ENCODE measurements at regions of chr3 and their contacts with region 1.

Region 1: DNA sequence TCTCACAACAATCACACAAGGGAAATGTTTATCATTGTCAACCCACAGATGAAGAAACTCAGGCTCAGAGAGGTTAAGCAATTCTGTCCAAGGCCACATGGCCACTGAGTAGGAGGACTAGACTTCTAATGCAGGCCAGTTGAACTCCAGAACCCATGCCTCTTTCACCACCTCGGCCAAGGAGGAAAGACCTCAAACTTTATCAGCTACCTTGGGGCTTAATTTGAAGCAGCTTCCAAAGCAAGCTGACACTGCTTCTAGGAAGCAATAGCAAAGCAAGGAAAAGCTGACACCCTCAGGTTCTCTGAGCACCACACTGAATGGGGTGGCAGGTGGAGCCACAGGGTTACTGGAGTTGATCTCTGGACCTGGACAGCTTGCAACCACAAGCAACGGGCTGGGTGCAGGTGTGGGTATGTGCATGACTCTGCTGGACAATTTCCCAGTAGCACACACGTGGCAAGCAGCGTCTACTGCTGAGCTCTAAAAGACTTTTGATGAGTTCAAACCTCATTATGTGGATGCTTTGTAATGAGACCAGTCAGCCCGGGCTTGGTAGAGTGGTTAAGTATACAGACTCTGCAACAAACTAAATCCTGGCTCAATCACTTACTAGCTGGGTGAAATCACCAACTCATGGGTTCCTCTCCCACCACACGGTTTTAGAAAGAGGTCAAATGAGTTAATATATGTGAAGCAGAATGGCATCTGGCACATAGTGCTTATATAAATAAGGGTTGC is 23.1 kb downstream of the CCNL1 start:
- DNase-seq: no peak
- ATAC-seq: peak; percentile 16
- H3K4me3 ChIP-seq: no peak overlapping the region
- H3K4me3 Mint-ChIP-seq: no peak overlapping the region
- H3K27ac ChIP-seq: peak overlapping the region in 1 of 2 experiments; percentile 13
- H3K27ac Mint-ChIP-seq: peak overlapping the region; percentile 74
- H3K4me1 ChIP-seq: peaks cover 17% of the 10 kb centered on the region
- H3K4me1 Mint-ChIP-seq: peaks cover 37% of the 10 kb centered on the region
- H3K27me3 ChIP-seq: no peaks in the 10 kb centered on the region
- H3K27me3 Mint-ChIP-seq: no peaks in the 10 kb centered on the region
- CTCF ChIP-seq: no peak

Region 2: GRCh38 chr3:156040041-156040440 is 1096.8 kb before region 1 on chr3:
- CTCF ChIA-PET with region 1: no interaction called
- POLR2A ChIA-PET with region 1: no interaction called
- intact Hi-C with region 1: loop called (anchors 2 to 10 kb)
- DNase-seq: no peak
- ATAC-seq: no peak
- H3K4me3 ChIP-seq: no peak overlapping the region
- H3K4me3 Mint-ChIP-seq: no peak overlapping the region
- H3K27ac ChIP-seq: no peak overlapping the region
- H3K27ac Mint-ChIP-seq: no peak overlapping the region
- H3K4me1 ChIP-seq: no peaks in the 10 kb centered on the region
- H3K4me1 Mint-ChIP-seq: peaks cover 2% of the 10 kb centered on the region
- H3K27me3 ChIP-seq: no peaks in the 10 kb centered on the region
- H3K27me3 Mint-ChIP-seq: peaks cover 5% of the 10 kb centered on the region
- CTCF ChIP-seq: no peak

Region 3: DNA sequence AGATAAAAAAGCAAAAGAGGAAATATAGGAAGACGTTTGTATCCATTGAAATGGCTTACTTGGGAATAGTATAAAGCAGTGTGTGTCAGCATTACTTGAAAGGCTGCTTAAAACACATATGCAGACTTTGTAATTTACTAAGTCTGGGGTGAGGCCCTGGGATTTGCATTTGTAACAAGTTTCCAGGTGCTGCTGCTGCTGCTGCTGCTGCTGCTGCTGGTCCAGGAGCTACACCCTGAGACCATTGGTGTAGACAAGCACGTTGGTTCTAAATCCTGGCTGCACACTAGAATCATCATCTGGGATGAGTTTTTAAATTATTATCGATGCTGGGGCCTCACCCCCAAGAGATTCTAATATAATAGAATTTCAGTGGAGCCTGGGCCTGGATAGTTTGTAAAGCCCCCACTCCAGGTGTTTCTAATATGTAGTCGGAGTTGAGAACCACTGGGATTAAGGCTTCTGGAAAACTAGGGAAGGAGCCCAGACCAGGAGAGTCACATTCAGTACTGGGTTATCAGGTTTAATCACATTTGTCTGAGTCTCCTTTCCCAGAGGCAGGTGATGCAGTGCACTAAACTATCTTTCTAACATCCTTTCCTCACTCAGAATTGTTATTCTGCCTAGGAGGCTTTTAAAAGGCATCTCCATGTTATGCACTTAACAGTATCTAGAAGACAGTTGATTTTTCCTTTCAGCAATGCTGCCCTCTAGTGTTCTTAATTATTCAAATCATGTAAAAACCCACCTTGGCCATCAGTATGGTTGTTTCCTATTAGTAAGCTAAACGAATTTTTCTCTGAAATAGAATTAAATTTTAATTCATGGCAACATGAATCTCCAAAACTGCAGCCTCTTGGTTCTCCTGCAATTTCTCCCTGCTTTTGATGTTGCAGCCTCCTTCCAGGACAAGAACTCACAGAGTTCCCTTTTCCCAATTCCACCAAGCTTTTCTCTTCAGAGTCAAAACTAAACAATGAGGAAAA is 627.3 kb before region 1 on chr3:
- CTCF ChIA-PET with region 1: interaction called, 20 read pairs
- POLR2A ChIA-PET with region 1: no interaction called
- intact Hi-C with region 1: no loop called
- DNase-seq: peak in 2 of 9 experiments; percentile 61 to 72
- ATAC-seq: peak; percentile 86
- H3K4me3 ChIP-seq: no peak overlapping the region
- H3K4me3 Mint-ChIP-seq: no peak overlapping the region
- H3K27ac ChIP-seq: no peak overlapping the region
- H3K27ac Mint-ChIP-seq: no peak overlapping the region
- H3K4me1 ChIP-seq: no peaks in the 10 kb centered on the region
- H3K4me1 Mint-ChIP-seq: no peaks in the 10 kb centered on the region
- H3K27me3 ChIP-seq: no peaks in the 10 kb centered on the region
- H3K27me3 Mint-ChIP-seq: peaks cover 15% of the 10 kb centered on the region
- CTCF ChIP-seq: peak; percentile 69

Region 4: GRCh38 chr3:156554842-156555687 is 581.8 kb before region 1 on chr3 and contains the start of gene SSR3:
- CTCF ChIA-PET with region 1: interaction called, 16 read pairs
- POLR2A ChIA-PET with region 1: interaction called, 3 read pairs
- intact Hi-C with region 1: no loop called
- DNase-seq: peak; percentile 98 to 99 (median 98)
- ATAC-seq: peak; percentile 98
- H3K4me3 ChIP-seq: peak within 1 kb of the TSS; percentile 87 to 98
- H3K4me3 Mint-ChIP-seq: peak within 1 kb of the TSS; percentile 97
- H3K27ac ChIP-seq: peak within 1 kb of the TSS; percentile 76 to 89
- H3K27ac Mint-ChIP-seq: peak within 1 kb of the TSS; percentile 94
- H3K4me1 ChIP-seq: peaks cover 20% of the 10 kb centered on the region
- H3K4me1 Mint-ChIP-seq: peaks cover 49% of the 10 kb centered on the region
- H3K27me3 ChIP-seq: no peaks in the 10 kb centered on the region
- H3K27me3 Mint-ChIP-seq: no peaks in the 10 kb centered on the region
- CTCF ChIP-seq: peak; percentile 27
- total RNA-seq, gene SSR3: 81.4 to 82.5 TPM

Region 5: GRCh38 chr3:157088601-157089454 is 48.0 kb before region 1 on chr3:
- CTCF ChIA-PET with region 1: interaction called, 27 read pairs
- POLR2A ChIA-PET with region 1: interaction called, 12 read pairs
- intact Hi-C with region 1: no loop called
- DNase-seq: peak; percentile 87 to 97 (median 93)
- ATAC-seq: peak; percentile 92
- H3K4me3 ChIP-seq: peak overlapping the region; percentile 96 to 98
- H3K4me3 Mint-ChIP-seq: peak overlapping the region; percentile 88
- H3K27ac ChIP-seq: peak overlapping the region; percentile 88 to 95
- H3K27ac Mint-ChIP-seq: peak overlapping the region; percentile 96
- H3K4me1 ChIP-seq: peaks cover 18% of the 10 kb centered on the region
- H3K4me1 Mint-ChIP-seq: peaks cover 26% of the 10 kb centered on the region
- H3K27me3 ChIP-seq: no peaks in the 10 kb centered on the region
- H3K27me3 Mint-ChIP-seq: no peaks in the 10 kb centered on the region
- CTCF ChIP-seq: no peak

Region 6: GRCh38 chr3:157122116-157122515 is 14.7 kb before region 1 on chr3:
- CTCF ChIA-PET with region 1: interaction called, 38 read pairs
- POLR2A ChIA-PET with region 1: interaction called, 4 read pairs
- intact Hi-C with region 1: no loop called
- DNase-seq: no peak
- ATAC-seq: no peak
- H3K4me3 ChIP-seq: no peak overlapping the region
- H3K4me3 Mint-ChIP-seq: no peak overlapping the region
- H3K27ac ChIP-seq: no peak overlapping the region
- H3K27ac Mint-ChIP-seq: no peak overlapping the region
- H3K4me1 ChIP-seq: peaks cover 3% of the 10 kb centered on the region
- H3K4me1 Mint-ChIP-seq: peaks cover 11% of the 10 kb centered on the region
- H3K27me3 ChIP-seq: no peaks in the 10 kb centered on the region
- H3K27me3 Mint-ChIP-seq: no peaks in the 10 kb centered on the region
- CTCF ChIP-seq: no peak

Region 7: GRCh38 chr3:157239082-157239704 is 102.4 kb after region 1 on chr3:
- CTCF ChIA-PET with region 1: interaction called, 18 read pairs
- POLR2A ChIA-PET with region 1: no interaction called
- intact Hi-C with region 1: loop called in 1 of 2 experiments (anchors 1 kb)
- DNase-seq: peak; percentile 49 to 80 (median 72)
- ATAC-seq: peak; percentile 100
- H3K4me3 ChIP-seq: no peak overlapping the region
- H3K4me3 Mint-ChIP-seq: no peak overlapping the region
- H3K27ac ChIP-seq: no peak overlapping the region
- H3K27ac Mint-ChIP-seq: no peak overlapping the region
- H3K4me1 ChIP-seq: no peaks in the 10 kb centered on the region
- H3K4me1 Mint-ChIP-seq: peaks cover 4% of the 10 kb centered on the region
- H3K27me3 ChIP-seq: no peaks in the 10 kb centered on the region
- H3K27me3 Mint-ChIP-seq: no peaks in the 10 kb centered on the region
- CTCF ChIP-seq: peak; percentile 73